Activated CD8-positive, alpha-beta T cell treated with anti-CD3 and anti-CD28 coated beads, Interleukin-2, amount 10 ng/mL, durations not matched to agents 7 days and 5 days (primary cell): ENCODE measurements at regions of chr21 and their contacts with region 1.

Region 1: DNA sequence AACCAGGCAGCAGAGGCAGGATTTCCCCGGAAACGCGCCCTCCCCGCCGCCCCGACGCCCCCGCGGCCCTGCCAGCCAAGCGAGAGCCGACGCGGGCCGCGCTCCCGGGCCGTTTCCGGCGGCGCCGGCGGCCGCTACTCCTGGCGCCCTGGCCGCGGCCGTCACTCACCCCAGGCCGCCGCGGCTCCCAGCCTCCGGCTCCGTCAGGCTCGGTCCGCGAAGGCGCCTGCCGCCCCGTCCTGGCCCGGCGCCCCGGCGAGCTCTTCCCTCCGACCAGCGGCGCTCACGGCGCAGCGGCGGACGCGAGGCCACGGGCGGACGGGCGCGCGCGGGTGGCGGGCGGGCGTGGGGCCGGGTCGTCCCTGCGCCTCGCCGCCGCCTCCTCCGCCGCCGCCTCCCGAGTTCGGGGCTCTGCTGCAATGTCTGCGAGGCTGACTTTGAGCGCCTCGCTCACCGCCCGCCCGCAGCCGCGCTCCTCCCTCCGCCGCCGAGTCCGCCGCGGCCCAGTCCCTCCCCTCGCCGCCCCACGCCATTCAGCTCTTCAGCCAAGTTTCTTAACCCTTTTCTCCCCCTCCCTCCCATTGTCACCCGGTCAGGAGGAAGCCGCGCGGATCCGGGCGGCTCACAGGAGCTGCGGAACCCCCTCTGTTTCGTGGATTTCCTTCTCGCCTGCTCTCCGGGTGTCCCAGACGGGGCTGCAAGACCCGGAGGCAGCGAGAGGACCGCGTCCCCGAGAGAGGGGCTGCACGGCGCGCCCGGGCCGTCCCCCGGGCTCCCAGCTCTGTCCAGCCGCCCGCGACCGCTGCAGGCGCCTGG is at the start of gene NRIP1:
- DNase-seq: peak; percentile 86
- ATAC-seq: peak; percentile 84
- H3K4me3 Mint-ChIP-seq: peak within 1 kb of the TSS; percentile 92
- H3K27ac Mint-ChIP-seq: peak within 1 kb of the TSS; percentile 97
- H3K4me1 Mint-ChIP-seq: peaks cover 41% of the 10 kb centered on the region
- H3K27me3 Mint-ChIP-seq: peaks cover 9% of the 10 kb centered on the region
- total RNA-seq, gene NRIP1: 18.9 to 20.1 TPM

Region 2: GRCh38 chr21:14382835-14383594 is 681.8 kb before region 1 on chr21 and contains the start of gene HSPA13:
- CTCF ChIA-PET with region 1: no interaction called
- POLR2A ChIA-PET with region 1: interaction called, 25 read pairs
- DNase-seq: peak; percentile 100
- ATAC-seq: peak; percentile 98
- H3K4me3 Mint-ChIP-seq: peak within 1 kb of the TSS; percentile 99
- H3K27ac Mint-ChIP-seq: peak within 1 kb of the TSS; percentile 98
- H3K4me1 Mint-ChIP-seq: peaks cover 39% of the 10 kb centered on the region
- H3K27me3 Mint-ChIP-seq: peaks cover 2% of the 10 kb centered on the region
- total RNA-seq, gene HSPA13: 26.0 to 30.4 TPM

Region 3: DNA sequence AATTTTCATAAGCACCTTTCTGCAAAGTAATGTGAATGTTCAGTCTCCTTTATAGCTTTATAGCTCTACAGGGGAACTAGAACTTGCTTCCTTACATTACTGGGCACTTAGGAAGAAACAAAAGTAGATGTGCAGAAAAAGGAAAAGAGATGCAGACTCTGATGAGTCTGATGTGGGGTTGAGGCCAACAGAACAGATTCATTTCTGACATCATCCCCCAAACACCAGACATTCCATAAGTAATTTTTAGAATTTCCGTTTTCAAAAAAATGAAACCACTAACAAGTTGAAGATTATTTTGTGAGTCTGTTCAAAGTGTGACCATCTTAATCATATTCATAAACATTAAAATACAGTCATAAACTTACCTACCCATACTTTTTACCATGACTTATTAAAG is 96.0 kb before region 1 on chr21:
- CTCF ChIA-PET with region 1: no interaction called
- POLR2A ChIA-PET with region 1: no interaction called
- DNase-seq: no peak
- ATAC-seq: no peak
- H3K4me3 Mint-ChIP-seq: no peak overlapping the region
- H3K27ac Mint-ChIP-seq: no peak overlapping the region
- H3K4me1 Mint-ChIP-seq: no peaks in the 10 kb centered on the region
- H3K27me3 Mint-ChIP-seq: no peaks in the 10 kb centered on the region

Region 4: GRCh38 chr21:15005391-15005790 is 59.4 kb before region 1 on chr21:
- CTCF ChIA-PET with region 1: interaction called, 4 read pairs
- POLR2A ChIA-PET with region 1: interaction called, 12 read pairs
- DNase-seq: peak; percentile 53
- ATAC-seq: peak; percentile 68
- H3K4me3 Mint-ChIP-seq: peak overlapping the region; percentile 37
- H3K27ac Mint-ChIP-seq: peak overlapping the region; percentile 70
- H3K4me1 Mint-ChIP-seq: peaks cover 42% of the 10 kb centered on the region
- H3K27me3 Mint-ChIP-seq: no peaks in the 10 kb centered on the region

Region 5: DNA sequence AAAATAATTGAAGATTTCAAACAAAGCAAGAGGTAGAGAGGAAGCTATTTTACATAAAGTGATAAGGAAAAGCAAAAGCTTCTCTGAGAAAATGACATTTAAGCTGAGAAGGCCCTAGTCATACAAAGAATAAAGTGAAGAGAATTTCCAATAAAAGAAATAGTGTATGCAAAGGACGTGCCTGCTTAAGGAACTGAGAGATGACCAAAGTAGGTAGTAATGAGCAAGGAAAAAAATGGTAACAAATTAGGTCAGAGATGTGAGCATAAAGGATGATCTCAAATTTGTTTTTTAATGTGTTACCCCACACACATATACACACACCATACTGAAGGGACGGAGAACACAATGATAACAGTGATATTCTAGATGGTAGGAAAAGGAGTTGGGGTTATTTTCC is 46.4 kb before region 1 on chr21:
- CTCF ChIA-PET with region 1: no interaction called
- POLR2A ChIA-PET with region 1: no interaction called
- DNase-seq: no peak
- ATAC-seq: no peak
- H3K4me3 Mint-ChIP-seq: no peak overlapping the region
- H3K27ac Mint-ChIP-seq: no peak overlapping the region
- H3K4me1 Mint-ChIP-seq: peaks cover 14% of the 10 kb centered on the region
- H3K27me3 Mint-ChIP-seq: no peaks in the 10 kb centered on the region

Region 6: DNA sequence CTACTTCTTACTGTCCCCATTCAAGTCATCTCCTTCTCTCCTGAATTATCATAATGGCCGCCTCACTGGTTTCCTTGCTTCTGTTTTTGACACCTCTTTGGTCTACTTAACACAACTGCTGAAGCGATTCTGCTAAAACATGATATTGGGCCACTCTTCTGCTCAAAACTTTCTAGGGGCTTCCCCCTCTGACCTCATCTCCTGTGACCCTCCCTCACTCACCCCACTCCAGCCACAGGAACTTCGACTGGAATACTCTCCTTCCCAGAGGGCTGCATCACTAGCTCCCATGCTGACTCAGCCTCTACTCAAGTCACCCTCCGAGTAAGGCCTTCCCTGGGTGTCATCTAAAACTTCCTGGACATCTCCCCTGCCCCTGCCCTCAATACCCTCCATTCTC is 35.7 kb before region 1 on chr21:
- CTCF ChIA-PET with region 1: no interaction called
- POLR2A ChIA-PET with region 1: no interaction called
- DNase-seq: no peak
- ATAC-seq: no peak
- H3K4me3 Mint-ChIP-seq: no peak overlapping the region
- H3K27ac Mint-ChIP-seq: no peak overlapping the region
- H3K4me1 Mint-ChIP-seq: peaks cover 6% of the 10 kb centered on the region
- H3K27me3 Mint-ChIP-seq: no peaks in the 10 kb centered on the region

Region 7: DNA sequence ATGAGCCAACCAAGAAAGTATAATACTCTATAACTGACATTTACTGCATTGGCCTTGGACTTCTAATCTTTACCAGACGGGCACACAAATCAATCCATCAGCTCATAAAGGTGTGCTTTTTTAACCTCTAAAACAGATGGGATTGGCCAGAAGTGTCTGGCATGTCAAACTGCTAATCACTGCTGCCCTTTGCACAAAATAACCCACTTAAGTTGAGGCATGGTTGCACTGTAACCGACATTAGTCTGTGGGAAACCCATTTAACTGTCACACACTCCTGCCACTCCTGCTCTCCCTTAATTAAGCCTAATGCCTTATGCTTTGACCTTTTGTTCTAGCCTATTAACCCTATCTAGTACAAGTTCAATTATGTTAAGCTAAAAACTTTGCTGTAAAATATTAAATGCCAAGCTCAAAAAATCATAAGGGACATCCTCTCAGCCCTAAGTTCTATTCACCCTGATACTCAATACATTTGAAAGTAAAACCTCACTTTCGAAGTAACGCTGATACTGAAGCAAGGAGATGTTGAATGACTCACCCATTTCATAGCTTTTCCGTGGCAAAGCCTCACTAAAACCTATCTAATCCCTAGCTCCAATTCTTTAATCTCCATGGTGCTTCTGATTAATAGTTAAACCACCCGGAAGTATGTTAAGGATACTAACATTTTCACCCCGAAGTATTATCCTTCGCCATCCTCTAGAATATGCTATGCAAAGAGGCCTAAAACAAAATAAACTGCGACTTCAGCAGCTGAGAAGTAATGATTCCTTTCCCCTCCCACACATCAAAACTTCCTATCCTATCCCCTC is 12.9 kb before region 1 on chr21:
- CTCF ChIA-PET with region 1: interaction called, 3 read pairs
- POLR2A ChIA-PET with region 1: interaction called, 40 read pairs
- DNase-seq: no peak
- ATAC-seq: peak; percentile 75
- H3K4me3 Mint-ChIP-seq: peak overlapping the region; percentile 60
- H3K27ac Mint-ChIP-seq: peak overlapping the region; percentile 59
- H3K4me1 Mint-ChIP-seq: peaks cover 61% of the 10 kb centered on the region
- H3K27me3 Mint-ChIP-seq: no peaks in the 10 kb centered on the region